GM12878 (cell line): ENCODE measurements at regions of chr9 and their contacts with region 1.

Region 1: GRCh38 chr9:20622330-20623020 is at the start of gene MLLT3:
- DNase-seq: peak; percentile 87
- ATAC-seq: peak; percentile 85
- H3K4me3 ChIP-seq: peak within 1 kb of the TSS; percentile 87
- H3K27ac ChIP-seq: peak within 1 kb of the TSS; percentile 80
- H3K4me1 ChIP-seq: no peaks in the 10 kb centered on the region
- H3K27me3 ChIP-seq: no peaks in the 10 kb centered on the region
- CTCF ChIP-seq: peak in 1 of 3 experiments; percentile 13; a peak in 1 of 6 replicates
- EP300 ChIP-seq: no peak
- POLR2A ChIP-seq: peak; percentile 68
- RAD21 ChIP-seq: peak; percentile 10; the same call in 1 of the 2 replicates
- polyA plus RNA-seq, gene MLLT3: 32.9 to 37.9 TPM

Region 2: GRCh38 chr9:20479419-20480155 is 142.9 kb before region 1 on chr9:
- CTCF ChIA-PET with region 1: interaction called, 3 read pairs
- POLR2A ChIA-PET with region 1: interaction called, 3 read pairs
- RAD21 ChIA-PET with region 1: interaction called, 3 read pairs
- SMC1A ChIA-PET with region 1: interaction called, 7 read pairs
- in situ Hi-C with region 1: no loop called
- intact Hi-C with region 1: loop called (anchors 5 kb)
- DNase-seq: peak; percentile 44
- ATAC-seq: peak; percentile 93
- H3K4me3 ChIP-seq: peak overlapping the region; percentile 42; the same call in 1 of the 2 replicates
- H3K27ac ChIP-seq: peak overlapping the region; percentile 49
- H3K4me1 ChIP-seq: peaks cover 34% of the 10 kb centered on the region
- H3K27me3 ChIP-seq: no peaks in the 10 kb centered on the region
- CTCF ChIP-seq: no peak
- EP300 ChIP-seq: no peak
- POLR2A ChIP-seq: no peak
- RAD21 ChIP-seq: no peak

Region 3: GRCh38 chr9:20582150-20582549 is 40.3 kb before region 1 on chr9:
- CTCF ChIA-PET with region 1: interaction called, 6 read pairs
- POLR2A ChIA-PET with region 1: no interaction called
- RAD21 ChIA-PET with region 1: interaction called, 10 read pairs
- SMC1A ChIA-PET with region 1: interaction called, 6 read pairs
- in situ Hi-C with region 1: no loop called
- intact Hi-C with region 1: loop called (anchors 5 kb)
- DNase-seq: peak; percentile 37
- ATAC-seq: peak; percentile 87
- H3K4me3 ChIP-seq: no peak overlapping the region
- H3K27ac ChIP-seq: peak overlapping the region; percentile 46
- H3K4me1 ChIP-seq: peaks cover 16% of the 10 kb centered on the region
- H3K27me3 ChIP-seq: no peaks in the 10 kb centered on the region
- CTCF ChIP-seq: no peak
- EP300 ChIP-seq: peak; percentile 46 to 65; a peak in 2 of 4 replicates
- POLR2A ChIP-seq: no peak
- RAD21 ChIP-seq: no peak

Region 4: DNA sequence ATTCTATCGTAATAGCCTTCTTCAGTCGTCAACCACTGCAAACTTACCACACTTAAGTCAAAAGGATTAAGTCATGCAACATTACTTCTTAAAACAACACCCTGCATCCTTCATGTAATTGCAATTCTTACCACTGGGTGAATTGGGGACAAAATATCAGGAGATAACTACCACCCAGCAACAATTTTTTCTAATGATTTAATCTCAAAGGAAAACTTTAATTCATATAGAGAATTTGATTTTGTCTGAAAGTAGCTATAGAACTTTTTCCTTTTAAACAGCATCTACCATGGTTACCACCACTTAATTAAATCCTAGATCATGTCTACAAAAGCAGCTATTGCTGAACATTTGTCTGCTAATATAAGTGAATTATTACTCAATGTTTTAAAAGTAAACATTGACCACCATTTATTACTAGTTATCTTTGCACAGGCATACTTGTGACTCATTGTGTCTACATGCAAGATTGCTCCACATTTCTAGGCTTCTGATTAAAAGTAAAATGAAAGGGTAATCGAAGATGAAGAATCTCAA is 10.7 kb before region 1 on chr9:
- CTCF ChIA-PET with region 1: interaction called, 25 read pairs
- POLR2A ChIA-PET with region 1: interaction called, 14 read pairs
- RAD21 ChIA-PET with region 1: interaction called, 31 read pairs
- SMC1A ChIA-PET with region 1: interaction called, 68 read pairs
- in situ Hi-C with region 1: no loop called
- intact Hi-C with region 1: no loop called
- DNase-seq: no peak
- ATAC-seq: peak; percentile 75
- H3K4me3 ChIP-seq: no peak overlapping the region; the same call in 1 of the 2 replicates
- H3K27ac ChIP-seq: no peak overlapping the region
- H3K4me1 ChIP-seq: no peaks in the 10 kb centered on the region; the same call in 1 of the 2 replicates
- H3K27me3 ChIP-seq: no peaks in the 10 kb centered on the region
- CTCF ChIP-seq: peak in 2 of 3 experiments; percentile 36 to 39; a peak in 3 of 6 replicates
- EP300 ChIP-seq: no peak
- POLR2A ChIP-seq: no peak
- RAD21 ChIP-seq: 0 out of 2 replicates have a peak, but pooled peaks have one; percentile 20

Region 5: DNA sequence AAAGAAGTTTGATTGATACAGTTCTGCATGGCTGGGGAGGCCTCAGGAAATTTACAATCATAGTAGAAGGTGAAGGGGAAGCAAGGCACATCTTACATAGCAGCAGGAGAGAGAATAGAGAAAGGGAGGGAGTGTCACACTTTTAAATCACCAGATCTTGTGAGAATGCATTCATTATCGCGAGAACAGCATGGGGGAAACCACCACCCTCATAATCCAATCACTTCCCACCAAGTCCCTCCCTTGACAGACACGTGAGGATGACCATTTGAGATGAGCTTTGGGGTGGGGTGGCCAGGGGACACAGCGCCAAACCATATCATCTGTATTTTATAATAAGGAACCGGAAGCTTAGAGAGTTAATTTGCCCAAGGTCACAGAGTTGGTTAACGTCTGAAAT is 47.9 kb after region 1 on chr9:
- CTCF ChIA-PET with region 1: interaction called, 6 read pairs
- POLR2A ChIA-PET with region 1: interaction called, 5 read pairs
- RAD21 ChIA-PET with region 1: interaction called, 5 read pairs
- SMC1A ChIA-PET with region 1: interaction called, 10 read pairs
- in situ Hi-C with region 1: no loop called
- intact Hi-C with region 1: no loop called
- DNase-seq: no peak
- ATAC-seq: no peak; the same call in 2 of the 3 replicates
- H3K4me3 ChIP-seq: no peak overlapping the region
- H3K27ac ChIP-seq: no peak overlapping the region
- H3K4me1 ChIP-seq: no peaks in the 10 kb centered on the region
- H3K27me3 ChIP-seq: no peaks in the 10 kb centered on the region
- CTCF ChIP-seq: no peak
- EP300 ChIP-seq: no peak
- POLR2A ChIP-seq: no peak
- RAD21 ChIP-seq: no peak

Region 6: DNA sequence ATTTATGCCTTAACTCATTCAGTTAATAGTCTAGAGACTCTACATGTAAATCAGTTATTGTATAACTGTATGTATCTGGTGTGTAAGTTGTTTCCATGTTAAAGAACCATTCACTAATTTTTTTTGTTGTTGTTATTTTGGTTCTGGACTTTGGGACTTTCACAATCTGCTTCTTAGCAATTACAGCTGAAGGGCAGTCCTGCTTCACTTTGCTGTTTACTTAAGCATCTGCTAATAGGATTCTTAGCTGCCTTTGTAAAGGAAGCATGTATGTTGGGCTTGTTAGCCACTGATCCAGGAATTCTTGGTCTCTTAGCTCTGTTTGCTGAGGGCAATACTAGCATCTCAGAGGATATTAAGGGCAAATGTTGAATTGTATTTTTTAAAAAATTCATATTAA is 158.6 kb after region 1 on chr9:
- CTCF ChIA-PET with region 1: interaction called, 3 read pairs
- POLR2A ChIA-PET with region 1: no interaction called
- RAD21 ChIA-PET with region 1: interaction called, 5 read pairs
- SMC1A ChIA-PET with region 1: interaction called, 5 read pairs
- in situ Hi-C with region 1: no loop called
- intact Hi-C with region 1: loop called (anchors 5 kb)
- DNase-seq: no peak
- ATAC-seq: no peak
- H3K4me3 ChIP-seq: no peak overlapping the region
- H3K27ac ChIP-seq: no peak overlapping the region
- H3K4me1 ChIP-seq: no peaks in the 10 kb centered on the region
- H3K27me3 ChIP-seq: no peaks in the 10 kb centered on the region
- CTCF ChIP-seq: no peak
- EP300 ChIP-seq: no peak
- POLR2A ChIP-seq: no peak
- RAD21 ChIP-seq: no peak

Region 7: DNA sequence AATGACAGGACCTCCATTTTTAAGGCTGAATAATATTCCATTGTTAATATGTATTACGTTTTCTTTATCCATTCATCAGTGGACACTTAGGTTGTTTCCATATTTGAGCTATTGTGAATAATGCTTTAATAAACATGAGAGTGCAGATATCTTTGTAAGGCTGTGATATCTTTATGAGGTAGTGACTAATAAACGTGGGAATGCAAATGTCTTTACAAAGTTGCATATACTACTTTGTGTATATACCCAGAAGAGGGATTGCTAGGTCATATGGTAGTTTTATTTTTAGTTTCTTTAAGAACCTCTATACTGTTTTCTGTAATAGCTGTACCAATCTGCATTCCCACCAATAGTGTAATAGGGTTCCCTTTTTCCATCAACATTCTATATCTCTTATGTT is 210.3 kb after region 1 on chr9:
- CTCF ChIA-PET with region 1: no interaction called
- POLR2A ChIA-PET with region 1: no interaction called
- RAD21 ChIA-PET with region 1: no interaction called
- SMC1A ChIA-PET with region 1: no interaction called
- in situ Hi-C with region 1: no loop called
- intact Hi-C with region 1: no loop called
- DNase-seq: no peak
- ATAC-seq: no peak
- H3K4me3 ChIP-seq: no peak overlapping the region
- H3K27ac ChIP-seq: no peak overlapping the region
- H3K4me1 ChIP-seq: no peaks in the 10 kb centered on the region
- H3K27me3 ChIP-seq: no peaks in the 10 kb centered on the region
- CTCF ChIP-seq: no peak
- EP300 ChIP-seq: no peak
- POLR2A ChIP-seq: no peak
- RAD21 ChIP-seq: no peak

Region 8: DNA sequence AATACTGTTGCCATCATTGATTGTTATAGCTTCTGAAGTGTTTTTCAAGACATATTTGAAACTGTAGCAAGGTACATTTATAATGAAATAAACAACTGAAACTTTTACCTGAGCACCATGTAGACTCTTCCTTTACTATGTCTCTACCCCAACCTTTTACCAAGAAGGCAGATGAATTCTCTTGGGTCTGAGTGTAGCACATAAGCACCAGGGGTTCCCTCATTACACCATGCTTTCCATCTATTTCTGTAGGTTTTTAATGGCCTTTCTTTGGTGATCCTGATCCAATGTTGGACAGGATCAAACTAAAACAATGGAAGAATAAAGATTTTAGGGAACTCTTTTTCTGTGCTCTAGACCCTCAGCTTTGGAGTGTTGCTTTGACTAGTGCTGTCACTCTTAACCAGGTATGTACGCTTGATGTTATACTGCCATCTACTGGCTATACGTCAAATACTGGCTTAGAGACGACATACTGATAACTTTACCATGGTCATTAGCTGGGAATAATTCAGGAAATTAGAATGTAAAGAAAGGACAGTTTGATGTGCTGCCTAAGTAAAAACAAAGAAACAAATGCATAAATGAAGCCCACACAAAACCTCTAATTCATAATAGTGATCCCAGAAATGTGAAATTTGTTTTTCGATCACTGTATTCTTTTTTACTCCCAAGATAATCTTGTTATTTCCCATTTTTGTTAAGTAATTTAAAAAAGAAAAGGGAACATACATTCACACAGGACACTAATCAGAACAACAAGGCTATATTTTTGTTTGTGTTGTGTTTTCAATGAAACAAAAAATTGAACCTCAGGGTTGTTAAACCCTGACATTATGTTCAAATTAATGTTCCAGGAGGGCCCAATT is 488.5 kb after region 1 on chr9:
- CTCF ChIA-PET with region 1: interaction called, 21 read pairs
- POLR2A ChIA-PET with region 1: no interaction called
- RAD21 ChIA-PET with region 1: interaction called, 29 read pairs
- SMC1A ChIA-PET with region 1: interaction called, 37 read pairs
- in situ Hi-C with region 1: loop called (anchors 5 kb)
- intact Hi-C with region 1: loop called (anchors 1 kb)
- DNase-seq: peak; percentile 44
- ATAC-seq: peak; percentile 99
- H3K4me3 ChIP-seq: no peak overlapping the region
- H3K27ac ChIP-seq: no peak overlapping the region
- H3K4me1 ChIP-seq: no peaks in the 10 kb centered on the region
- H3K27me3 ChIP-seq: no peaks in the 10 kb centered on the region
- CTCF ChIP-seq: peak; percentile 77 to 87 (median 78)
- EP300 ChIP-seq: no peak
- POLR2A ChIP-seq: no peak
- RAD21 ChIP-seq: peak; percentile 97